MCF 10A (cell line): ENCODE measurements at regions of chr2 and their contacts with region 1.

Region 1: DNA sequence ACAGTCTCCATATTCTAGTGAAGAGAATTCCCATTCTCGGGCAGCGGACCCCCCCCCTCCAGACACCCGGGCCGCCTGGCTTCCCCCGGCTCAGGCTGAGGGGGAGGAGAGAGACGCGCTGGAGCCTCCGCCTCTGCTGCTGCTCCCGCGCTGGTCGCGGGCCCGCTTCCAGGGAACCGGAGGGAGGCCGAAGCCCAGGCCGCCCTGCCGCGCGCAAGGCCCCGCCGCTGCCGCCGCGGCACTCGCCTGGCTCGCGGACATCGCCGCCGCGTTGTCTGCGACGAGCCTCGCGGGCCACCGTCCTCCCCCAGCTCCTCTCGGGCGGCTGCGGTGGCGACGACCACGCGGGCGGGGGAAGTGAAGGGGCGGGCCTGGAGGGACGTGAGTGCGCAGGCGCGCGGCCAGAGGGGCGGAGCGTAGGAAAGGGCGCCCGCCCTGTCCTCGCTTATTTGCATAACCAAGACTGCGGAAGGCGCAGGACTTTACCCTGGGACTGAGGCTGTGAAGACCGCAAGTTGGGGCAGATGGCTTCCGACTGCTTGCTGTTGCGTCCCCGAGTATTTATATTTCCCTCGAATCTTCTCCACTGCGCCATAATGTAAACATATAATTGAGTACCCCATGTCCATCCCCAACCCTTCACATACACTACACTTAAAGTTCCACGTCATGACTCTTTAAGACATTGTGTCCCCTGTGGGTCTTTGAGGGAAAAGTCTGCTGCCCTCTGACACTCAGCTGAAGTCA is at the start of gene ARL5A:
- DNase-seq: peak; percentile 95
- H3K4me3 Mint-ChIP-seq: peak within 1 kb of the TSS; percentile 93
- H3K27ac Mint-ChIP-seq: peak within 1 kb of the TSS; percentile 88
- H3K4me1 Mint-ChIP-seq: peaks cover 9% of the 10 kb centered on the region
- H3K27me3 Mint-ChIP-seq: no peaks in the 10 kb centered on the region
- CTCF ChIP-seq: no peak
- total RNA-seq, gene ARL5A: 34.8 and 40.9 TPM in 2 replicates

Region 2: GRCh38 chr2:151808258-151809072 is 19.9 kb before region 1 on chr2:
- CTCF ChIA-PET with region 1: interaction called, 12 read pairs
- POLR2A ChIA-PET with region 1: interaction called, 10 read pairs
- intact Hi-C with region 1: no loop called
- DNase-seq: peak; percentile 38
- H3K4me3 Mint-ChIP-seq: no peak overlapping the region
- H3K27ac Mint-ChIP-seq: no peak overlapping the region
- H3K4me1 Mint-ChIP-seq: no peaks in the 10 kb centered on the region
- H3K27me3 Mint-ChIP-seq: no peaks in the 10 kb centered on the region
- CTCF ChIP-seq: peak; percentile 26

Region 3: DNA sequence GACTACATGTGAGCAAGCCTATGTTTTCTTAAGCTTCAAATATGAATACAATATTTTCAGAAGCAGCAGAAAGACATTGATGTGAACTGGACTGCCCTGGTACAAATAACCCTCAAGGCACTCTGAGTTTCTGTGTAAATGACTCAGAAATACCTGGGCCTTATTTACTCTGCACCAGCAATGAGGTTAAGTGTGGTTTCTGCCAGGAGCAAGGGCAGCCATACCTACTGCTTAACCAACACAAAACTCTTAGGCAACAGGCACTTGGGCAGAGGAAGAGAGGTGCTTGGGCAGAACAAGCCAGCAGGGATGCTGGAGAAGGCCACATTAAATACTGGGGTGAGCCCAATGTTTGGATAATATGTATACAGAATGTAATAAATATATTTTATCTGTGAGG is 29.3 kb after region 1 on chr2:
- CTCF ChIA-PET with region 1: interaction called, 4 read pairs
- POLR2A ChIA-PET with region 1: interaction called, 15 read pairs
- intact Hi-C with region 1: no loop called
- DNase-seq: peak; percentile 60
- H3K4me3 Mint-ChIP-seq: no peak overlapping the region
- H3K27ac Mint-ChIP-seq: no peak overlapping the region
- H3K4me1 Mint-ChIP-seq: no peaks in the 10 kb centered on the region
- H3K27me3 Mint-ChIP-seq: no peaks in the 10 kb centered on the region
- CTCF ChIP-seq: no peak

Region 4: GRCh38 chr2:151946899-151947822 is 118.8 kb after region 1 on chr2:
- CTCF ChIA-PET with region 1: no interaction called
- POLR2A ChIA-PET with region 1: interaction called, 23 read pairs
- intact Hi-C with region 1: no loop called
- DNase-seq: peak; percentile 47
- H3K4me3 Mint-ChIP-seq: peak overlapping the region; percentile 47
- H3K27ac Mint-ChIP-seq: peak overlapping the region; percentile 63
- H3K4me1 Mint-ChIP-seq: peaks cover 25% of the 10 kb centered on the region
- H3K27me3 Mint-ChIP-seq: no peaks in the 10 kb centered on the region
- CTCF ChIP-seq: peak; percentile 39